Thyroid gland (tissue), 4 donors: ENCODE measurements at regions of chr5 and their contacts with region 1.

Region 1: DNA sequence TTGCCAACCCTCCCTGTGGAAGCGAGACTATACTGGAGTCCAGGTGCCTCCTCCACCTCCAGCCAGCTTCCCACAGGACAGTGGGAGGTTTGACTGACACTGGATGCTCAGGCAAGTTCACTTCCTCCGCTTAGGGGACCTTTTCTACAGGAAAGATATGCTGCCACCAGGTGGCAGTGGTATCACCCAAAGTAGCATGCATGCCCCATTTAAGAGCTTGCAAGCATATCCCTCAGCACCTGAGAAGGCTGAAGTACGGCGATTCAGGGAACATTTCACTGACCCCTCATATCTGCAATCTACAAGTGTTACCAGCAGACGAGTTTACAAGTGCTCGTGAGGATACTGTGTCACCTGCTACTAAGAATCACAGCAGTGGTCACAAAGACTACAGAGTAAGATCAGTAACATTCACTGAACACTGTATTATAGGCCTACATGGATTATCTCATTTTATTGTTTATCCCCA is 75.5 kb downstream of the KLHL3 start:
- DNase-seq: peak; percentile 90
- H3K4me3 ChIP-seq: no peak overlapping the region
- H3K27ac ChIP-seq: peak overlapping the region; percentile 61 to 76 (median 66)
- H3K4me1 ChIP-seq: peaks cover 3 to 32% of the 10 kb centered on the region in 2 donors
- H3K27me3 ChIP-seq: no peaks in the 10 kb centered on the region
- CTCF ChIP-seq: peak; percentile 35 to 95 (median 78)
- POLR2A ChIP-seq: no peak

Region 2: GRCh38 chr5:137619191-137619870 is 41.1 kb before region 1 on chr5:
- intact Hi-C with region 1: no loop called
- DNase-seq: peak; percentile 69 to 83
- H3K4me3 ChIP-seq: no peak overlapping the region
- H3K27ac ChIP-seq: no peak overlapping the region
- H3K4me1 ChIP-seq: peaks cover 12 to 13% of the 10 kb centered on the region in 2 donors
- H3K27me3 ChIP-seq: no peaks in the 10 kb centered on the region
- CTCF ChIP-seq: no peak
- POLR2A ChIP-seq: no peak

Region 3: DNA sequence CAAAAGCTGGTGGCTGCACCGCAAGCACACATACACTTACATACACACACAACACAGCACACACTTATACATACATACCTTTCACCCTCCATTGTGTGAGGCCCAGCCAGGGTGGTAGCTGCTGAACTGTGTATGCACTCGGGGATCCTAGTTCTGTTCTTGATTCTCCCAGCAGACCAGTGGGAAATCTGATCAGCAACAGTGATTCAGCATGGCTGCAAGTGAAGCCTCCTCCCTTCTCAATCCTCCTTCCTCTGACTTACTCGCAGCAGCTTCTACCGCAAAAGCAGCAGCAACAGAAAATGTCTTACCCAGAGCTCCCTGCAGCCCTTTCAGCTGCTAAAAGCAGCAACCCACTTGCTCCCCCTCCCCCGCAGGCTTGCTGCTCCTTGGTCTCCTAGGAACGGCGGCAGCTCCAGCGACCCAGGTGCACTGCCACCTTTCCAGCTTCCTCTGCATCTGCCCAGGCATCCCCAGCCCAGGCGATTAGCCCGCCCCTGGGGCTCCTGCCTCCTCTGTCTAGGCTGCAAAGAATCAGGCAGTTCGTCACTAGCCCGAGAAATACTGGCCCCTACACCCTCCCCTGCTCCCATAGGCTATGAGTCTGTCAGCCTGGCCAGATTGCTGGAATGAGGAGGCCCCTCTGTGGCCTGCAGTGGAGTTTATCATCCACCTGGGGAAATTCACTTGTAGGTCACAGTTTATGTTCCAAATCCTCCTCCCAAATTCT is 75.3 kb after region 1 on chr5 and contains the start of gene KLHL3:
- intact Hi-C with region 1: loop called (anchors 2 kb)
- DNase-seq: peak; percentile 78 to 80
- H3K4me3 ChIP-seq: peak within 1 kb of the TSS; percentile 8 to 33 (median 16)
- H3K27ac ChIP-seq: peak within 1 kb of the TSS; percentile 84 to 91 (median 87)
- H3K4me1 ChIP-seq: peaks cover 29 to 42% of the 10 kb centered on the region in 2 donors
- H3K27me3 ChIP-seq: no peaks in the 10 kb centered on the region
- CTCF ChIP-seq: peak in 5 of 6 experiments; percentile 14 to 68 (median 42)
- POLR2A ChIP-seq: peak in 1 of 2 donors; percentile 51
- total RNA-seq, gene KLHL3: 11.9 to 26.7 (median 17.9) TPM

Region 4: DNA sequence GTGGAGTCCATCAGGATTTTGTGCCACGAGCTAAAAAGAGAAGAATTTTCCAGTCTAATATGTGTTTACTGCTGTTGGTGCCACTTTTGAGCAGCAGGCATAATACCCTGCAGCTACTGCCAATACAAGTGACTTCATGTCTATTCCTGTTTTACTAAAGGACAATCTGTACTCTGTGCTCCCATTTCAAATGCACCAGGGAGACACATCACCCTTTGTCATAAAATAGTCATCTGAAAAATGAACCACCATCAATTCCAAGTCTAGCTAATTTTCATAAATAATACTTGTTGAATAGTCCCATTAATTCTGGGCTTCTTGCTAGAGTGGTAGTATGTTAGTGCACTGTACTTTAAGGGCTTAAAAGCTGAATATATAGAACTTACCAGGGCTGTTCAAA is 219.9 kb after region 1 on chr5:
- intact Hi-C with region 1: no loop called
- DNase-seq: no peak
- H3K4me3 ChIP-seq: no peak overlapping the region
- H3K27ac ChIP-seq: no peak overlapping the region
- H3K4me1 ChIP-seq: no peaks in the 10 kb centered on the region
- H3K27me3 ChIP-seq: no peaks in the 10 kb centered on the region
- CTCF ChIP-seq: no peak
- POLR2A ChIP-seq: no peak

Region 5: DNA sequence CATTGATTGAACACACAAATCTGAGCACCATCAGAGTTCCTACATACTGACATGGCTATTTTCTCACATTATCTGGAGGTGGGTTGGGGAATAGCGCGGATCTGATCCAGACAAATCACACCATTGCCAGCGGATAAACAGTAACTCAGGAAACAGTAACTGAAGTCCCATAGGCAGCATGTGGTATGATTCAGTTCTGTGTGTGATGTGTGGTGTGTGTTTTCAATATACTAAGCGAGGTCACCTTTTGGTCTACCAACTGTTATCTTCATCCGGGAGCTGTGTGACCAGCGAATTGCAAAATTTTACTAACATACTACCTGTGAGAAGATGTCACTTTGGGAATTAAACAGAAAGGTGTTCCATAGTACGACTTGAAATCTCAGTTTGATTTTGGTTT is 278.9 kb after region 1 on chr5:
- intact Hi-C with region 1: no loop called
- DNase-seq: no peak
- H3K4me3 ChIP-seq: no peak overlapping the region
- H3K27ac ChIP-seq: no peak overlapping the region
- H3K4me1 ChIP-seq: no peaks in the 10 kb centered on the region
- H3K27me3 ChIP-seq: no peaks in the 10 kb centered on the region
- CTCF ChIP-seq: no peak
- POLR2A ChIP-seq: no peak